H1 (cell line): ENCODE measurements at regions of chr1 and their contacts with region 1.

Region 1: DNA sequence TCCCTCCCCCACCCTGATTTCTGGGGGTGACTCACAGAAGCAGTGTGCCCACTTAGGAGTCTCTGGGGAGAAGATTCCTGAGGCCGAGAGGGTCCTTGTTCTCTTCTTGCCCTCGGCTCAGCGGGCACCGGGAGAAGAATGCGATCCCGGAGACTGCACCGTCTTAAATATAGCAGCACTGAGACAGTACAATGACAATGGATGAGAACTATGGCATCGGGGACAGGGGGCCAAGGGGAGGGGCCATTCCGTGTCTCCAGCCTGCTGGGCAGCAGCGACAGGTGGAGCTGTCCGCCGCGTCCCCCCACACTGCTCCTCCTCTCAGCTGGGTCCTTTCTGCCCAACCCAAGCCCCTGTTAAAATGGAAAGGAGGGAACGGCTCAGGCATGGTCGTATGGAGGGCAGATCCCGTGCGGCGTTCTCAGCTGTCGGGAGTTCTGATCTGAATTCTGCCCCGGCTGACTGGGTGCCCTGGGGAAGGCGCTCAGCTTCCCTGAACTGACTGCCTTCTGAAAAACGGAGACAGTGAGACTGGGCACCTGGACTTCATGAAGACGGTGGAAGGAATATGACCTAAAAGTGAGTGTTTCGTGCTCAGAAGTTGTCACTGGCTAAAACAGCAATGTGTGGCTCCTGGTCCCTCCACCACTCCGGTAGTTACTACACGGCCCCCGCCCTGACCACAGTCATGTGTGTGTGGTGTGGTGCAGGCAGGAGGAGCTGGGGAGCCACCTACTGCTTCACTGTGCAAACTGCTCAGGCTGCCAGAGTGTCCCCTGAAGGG is at the start of gene MYOM3:
- DNase-seq: peak; percentile 27 to 63
- H3K4me3 ChIP-seq: no peak within 1 kb of the TSS
- H3K27ac ChIP-seq: no peak within 1 kb of the TSS
- H3K4me1 ChIP-seq: peaks cover 2 to 11% (median 5%) of the 10 kb centered on the region in 4 experiments; a peak in 5 of 7 replicates
- H3K27me3 ChIP-seq: no peaks in the 10 kb centered on the region
- CTCF ChIP-seq: peak; percentile 46 to 69 (median 63)
- EP300 ChIP-seq: no peak
- POLR2A ChIP-seq: no peak
- RAD21 ChIP-seq: peak; percentile 59 to 76
- total RNA-seq, gene MYOM3: 0.09 and 0.36 TPM in 2 replicates

Region 2: DNA sequence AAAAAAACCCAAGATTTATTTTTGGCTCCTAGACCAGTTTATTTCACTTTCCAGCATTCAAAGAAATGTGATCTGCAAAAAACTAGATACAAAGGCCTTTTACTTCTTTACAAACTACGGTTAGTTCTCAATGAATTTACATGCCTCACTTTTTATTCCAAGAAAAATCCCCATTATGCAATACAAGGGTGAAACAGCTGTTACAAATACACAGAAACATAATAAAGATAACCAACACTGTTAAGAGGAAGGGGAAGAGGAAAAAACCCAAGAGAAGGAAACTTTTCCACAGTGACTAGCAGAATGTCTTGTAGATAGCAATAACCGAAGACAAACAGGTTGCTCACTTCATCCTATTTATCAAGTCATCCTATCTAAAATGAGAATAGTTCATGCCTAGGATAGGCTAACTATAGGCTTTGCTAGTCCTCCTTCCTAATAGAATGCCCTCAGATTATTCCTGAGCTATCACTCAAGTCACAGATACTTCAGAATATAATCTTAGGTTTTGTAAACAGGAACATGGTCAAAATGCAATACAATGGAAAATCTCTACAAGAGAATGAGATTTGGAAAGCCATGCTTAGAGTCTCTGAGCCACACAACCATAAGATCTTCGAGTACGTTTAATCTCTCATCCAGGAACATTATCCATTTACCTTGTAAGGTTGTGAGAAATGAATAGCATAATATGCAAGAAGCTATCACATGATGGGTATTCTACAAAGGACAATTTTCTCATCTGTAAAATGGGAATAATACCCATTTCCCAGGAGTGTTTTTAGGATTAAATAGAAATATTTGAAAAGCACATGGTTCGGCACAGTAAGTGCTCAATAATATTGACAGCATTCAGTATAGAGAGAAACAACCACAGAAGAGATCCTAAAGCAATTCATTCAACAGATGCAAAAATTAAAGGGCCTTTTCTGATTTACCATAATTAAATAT is 147.1 kb before region 1 on chr1:
- CTCF ChIA-PET with region 1: no interaction called
- POLR2A ChIA-PET with region 1: no interaction called
- DNase-seq: no peak
- H3K4me3 ChIP-seq: no peak overlapping the region
- H3K27ac ChIP-seq: no peak overlapping the region
- H3K4me1 ChIP-seq: no peaks in the 10 kb centered on the region
- H3K27me3 ChIP-seq: no peaks in the 10 kb centered on the region
- CTCF ChIP-seq: no peak
- EP300 ChIP-seq: no peak
- POLR2A ChIP-seq: peak; percentile 17 to 32; a peak in 1 of 3 replicates
- RAD21 ChIP-seq: no peak

Region 3: GRCh38 chr1:24003331-24003972 is 108.7 kb before region 1 on chr1:
- CTCF ChIA-PET with region 1: no interaction called
- POLR2A ChIA-PET with region 1: no interaction called
- DNase-seq: peak in 1 of 2 experiments; percentile 21
- H3K4me3 ChIP-seq: peak overlapping the region in 1 of 4 experiments; percentile 37; a peak in 3 of 8 replicates
- H3K27ac ChIP-seq: peak overlapping the region; percentile 51; the same call in 1 of the 2 replicates
- H3K4me1 ChIP-seq: peaks cover 5 to 13% (median 12%) of the 10 kb centered on the region in 4 experiments
- H3K27me3 ChIP-seq: no peaks in the 10 kb centered on the region
- CTCF ChIP-seq: no peak
- EP300 ChIP-seq: no peak
- POLR2A ChIP-seq: no peak
- RAD21 ChIP-seq: no peak

Region 4: GRCh38 chr1:24070821-24071393 is 41.3 kb before region 1 on chr1:
- CTCF ChIA-PET with region 1: interaction called, 19 read pairs
- POLR2A ChIA-PET with region 1: no interaction called
- DNase-seq: peak; percentile 53 to 91
- H3K4me3 ChIP-seq: peak overlapping the region in 2 of 4 experiments; percentile 29 to 42; a peak in 3 of 8 replicates
- H3K27ac ChIP-seq: no peak overlapping the region
- H3K4me1 ChIP-seq: peaks cover 0 to 3% (median under 1%) of the 10 kb centered on the region in 4 experiments; a peak in 4 of 7 replicates
- H3K27me3 ChIP-seq: no peaks in the 10 kb centered on the region; a peak in 1 of 7 replicates
- CTCF ChIP-seq: peak; percentile 90 to 94 (median 94)
- EP300 ChIP-seq: 0 out of 3 replicates have a peak, but pooled peaks of 1 of the 2 experiments have one; percentile 7
- POLR2A ChIP-seq: no peak
- RAD21 ChIP-seq: peak; percentile 86 to 93

Region 5: GRCh38 chr1:24094554-24094953 is 17.6 kb before region 1 on chr1:
- CTCF ChIA-PET with region 1: interaction called, 35 read pairs
- POLR2A ChIA-PET with region 1: interaction called, 4 read pairs
- DNase-seq: peak in 1 of 2 experiments; percentile 63
- H3K4me3 ChIP-seq: no peak overlapping the region
- H3K27ac ChIP-seq: no peak overlapping the region
- H3K4me1 ChIP-seq: peaks cover 0 to 6% (median 2%) of the 10 kb centered on the region in 4 experiments; a peak in 3 of 7 replicates
- H3K27me3 ChIP-seq: no peaks in the 10 kb centered on the region
- CTCF ChIP-seq: peak; percentile 48 to 57 (median 48)
- EP300 ChIP-seq: no peak
- POLR2A ChIP-seq: no peak
- RAD21 ChIP-seq: peak; percentile 32 to 53; a peak in 3 of 4 replicates

Region 6: GRCh38 chr1:24133819-24134775 is 21.9 kb after region 1 on chr1:
- CTCF ChIA-PET with region 1: no interaction called
- POLR2A ChIA-PET with region 1: no interaction called
- DNase-seq: no peak
- H3K4me3 ChIP-seq: no peak overlapping the region
- H3K27ac ChIP-seq: no peak overlapping the region
- H3K4me1 ChIP-seq: peaks cover 0 to 4% (median under 1%) of the 10 kb centered on the region in 4 experiments; a peak in 5 of 7 replicates
- H3K27me3 ChIP-seq: no peaks in the 10 kb centered on the region; a peak in 1 of 7 replicates
- CTCF ChIP-seq: no peak
- EP300 ChIP-seq: no peak
- POLR2A ChIP-seq: no peak
- RAD21 ChIP-seq: no peak

Region 7: GRCh38 chr1:24191860-24192259 is 79.7 kb after region 1 on chr1:
- CTCF ChIA-PET with region 1: no interaction called
- POLR2A ChIA-PET with region 1: no interaction called
- DNase-seq: no peak
- H3K4me3 ChIP-seq: no peak overlapping the region
- H3K27ac ChIP-seq: no peak overlapping the region
- H3K4me1 ChIP-seq: peaks cover 0 to 3% (median 1%) of the 10 kb centered on the region in 4 experiments; a peak in 1 of 7 replicates
- H3K27me3 ChIP-seq: no peaks in the 10 kb centered on the region; a peak in 1 of 7 replicates
- CTCF ChIP-seq: no peak
- EP300 ChIP-seq: no peak
- POLR2A ChIP-seq: no peak
- RAD21 ChIP-seq: no peak